ENCODE measurements at regions of chr17 and their contacts with region 1.

Region 1: DNA sequence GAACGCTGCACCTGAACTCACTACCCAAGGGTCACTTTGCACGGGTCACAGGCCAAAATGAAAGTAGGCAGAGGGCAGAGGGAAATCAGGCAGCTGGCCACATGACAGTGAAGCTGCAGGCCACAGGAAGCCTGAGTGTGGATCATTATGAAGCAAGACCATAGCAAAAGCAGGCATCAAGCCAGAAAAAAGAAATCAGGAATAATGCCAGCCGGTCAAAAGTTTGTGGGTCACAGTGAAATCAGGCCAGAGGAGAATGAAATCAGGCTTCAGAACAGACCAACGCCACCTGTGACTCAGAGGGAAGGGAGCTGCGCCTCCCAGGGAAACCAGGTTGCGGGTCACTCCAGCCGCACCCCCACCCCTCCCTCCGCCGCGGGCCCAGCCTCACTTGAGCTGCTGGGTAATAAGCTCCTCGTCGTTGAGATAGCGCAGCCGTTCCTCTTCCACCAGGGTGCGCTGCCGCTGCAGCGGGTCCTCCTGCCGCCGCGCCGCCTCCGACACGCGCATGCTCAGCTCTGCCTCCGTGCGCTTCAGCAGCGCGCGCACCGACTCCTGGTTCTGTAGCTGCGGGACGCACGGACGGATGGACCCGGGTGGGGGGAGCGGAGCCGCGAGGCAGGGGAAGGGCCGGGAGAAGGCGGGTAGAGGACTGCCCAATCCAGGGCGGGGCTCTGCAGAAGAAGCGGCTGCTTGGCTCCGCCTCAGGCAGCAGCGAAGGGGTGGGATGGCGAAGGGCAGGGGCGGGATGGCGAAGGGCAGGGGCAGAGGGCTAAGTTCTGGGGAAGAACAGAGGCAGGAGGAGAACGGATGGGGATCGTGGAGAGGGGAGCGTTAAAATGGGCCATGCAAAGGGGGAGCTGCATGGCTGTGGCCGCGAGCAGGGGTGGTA is 47.7 kb downstream of the SRCIN1 start:
- DNase-seq: peak; percentile 97
- H3K4me3 Mint-ChIP-seq: peak overlapping the region; percentile 90
- H3K27ac Mint-ChIP-seq: peak overlapping the region; percentile 29
- H3K4me1 Mint-ChIP-seq: peaks cover 23% of the 10 kb centered on the region
- H3K27me3 Mint-ChIP-seq: peaks cover 52% of the 10 kb centered on the region

Region 2: GRCh38 chr17:36942019-36942599 is 1616.0 kb before region 1 on chr17:
- intact Hi-C with region 1: loop called (anchors 5 kb)
- DNase-seq: peak; percentile 67
- H3K4me3 Mint-ChIP-seq: peak overlapping the region; percentile 2
- H3K27ac Mint-ChIP-seq: peak overlapping the region; percentile 39
- H3K4me1 Mint-ChIP-seq: peaks cover 25% of the 10 kb centered on the region
- H3K27me3 Mint-ChIP-seq: peaks cover 78% of the 10 kb centered on the region

Region 3: GRCh38 chr17:38584350-38584925 is 26.4 kb after region 1 on chr17:
- intact Hi-C with region 1: loop called (anchors 1 kb)
- DNase-seq: peak; percentile 88
- H3K4me3 Mint-ChIP-seq: peak overlapping the region; percentile 46
- H3K27ac Mint-ChIP-seq: peak overlapping the region; percentile 57
- H3K4me1 Mint-ChIP-seq: peaks cover 16% of the 10 kb centered on the region
- H3K27me3 Mint-ChIP-seq: peaks cover 70% of the 10 kb centered on the region

Region 4: GRCh38 chr17:38605888-38606645 is 48.0 kb after region 1 on chr17 and contains the start of gene SRCIN1:
- intact Hi-C with region 1: loop called (anchors 2 kb)
- DNase-seq: peak; percentile 85
- H3K4me3 Mint-ChIP-seq: peak within 1 kb of the TSS; percentile 80
- H3K27ac Mint-ChIP-seq: peak within 1 kb of the TSS; percentile 20
- H3K4me1 Mint-ChIP-seq: peaks cover 10% of the 10 kb centered on the region
- H3K27me3 Mint-ChIP-seq: peaks cover 69% of the 10 kb centered on the region
- total RNA-seq, gene SRCIN1: 0.21 and 0.26 TPM in 2 replicates

Region 5: GRCh38 chr17:38667099-38667786 is 109.2 kb after region 1 on chr17:
- intact Hi-C with region 1: loop called (anchors 1 kb)
- DNase-seq: peak; percentile 89
- H3K4me3 Mint-ChIP-seq: no peak overlapping the region
- H3K27ac Mint-ChIP-seq: no peak overlapping the region
- H3K4me1 Mint-ChIP-seq: peaks cover 21% of the 10 kb centered on the region
- H3K27me3 Mint-ChIP-seq: peaks cover 55% of the 10 kb centered on the region

Region 6: DNA sequence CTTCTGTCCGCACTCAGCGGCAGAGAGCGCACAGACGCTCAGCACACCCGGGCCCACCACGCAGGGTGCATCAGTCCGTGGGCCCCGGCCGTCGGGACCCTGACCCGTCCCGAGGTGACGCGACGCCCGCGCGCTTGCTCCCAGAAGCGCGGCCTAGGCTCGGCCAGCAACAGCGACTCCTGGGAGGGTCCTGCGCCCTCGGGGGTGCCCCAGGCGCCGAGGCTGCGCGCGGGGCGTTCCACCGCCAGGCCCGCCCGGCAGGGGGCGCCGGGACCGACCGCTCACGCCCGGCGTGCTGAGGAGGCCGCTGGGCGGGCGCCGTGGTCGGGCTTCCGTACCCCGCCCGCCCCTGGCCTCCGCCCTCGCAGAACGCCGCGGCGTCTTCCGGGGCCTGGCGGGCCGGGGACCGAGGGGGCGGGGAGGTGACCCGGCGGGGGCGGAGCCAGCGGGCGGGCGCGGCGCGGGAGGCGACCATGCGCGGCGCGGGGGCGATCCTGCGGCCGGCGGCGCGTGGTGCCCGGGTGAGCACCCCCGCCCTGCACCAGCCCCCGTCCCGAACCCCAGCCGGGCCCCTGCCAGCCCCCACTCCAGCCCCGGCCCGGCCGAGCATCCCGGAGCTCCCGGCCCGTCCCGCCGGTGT is 171.9 kb after region 1 on chr17 and contains the start of gene CISD3:
- intact Hi-C with region 1: loop called (anchors 10 kb)
- DNase-seq: peak; percentile 97
- H3K4me3 Mint-ChIP-seq: peak within 1 kb of the TSS; percentile 93
- H3K27ac Mint-ChIP-seq: peak within 1 kb of the TSS; percentile 95
- H3K4me1 Mint-ChIP-seq: peaks cover 72% of the 10 kb centered on the region
- H3K27me3 Mint-ChIP-seq: no peaks in the 10 kb centered on the region
- total RNA-seq, gene CISD3: 44.0 and 46.7 TPM in 2 replicates

Region 7: GRCh38 chr17:39591958-39592954 is 1034.2 kb after region 1 on chr17:
- intact Hi-C with region 1: loop called (anchors 5 kb)
- DNase-seq: peak; percentile 84
- H3K4me3 Mint-ChIP-seq: no peak overlapping the region
- H3K27ac Mint-ChIP-seq: no peak overlapping the region
- H3K4me1 Mint-ChIP-seq: peaks cover 3% of the 10 kb centered on the region
- H3K27me3 Mint-ChIP-seq: peaks cover 49% of the 10 kb centered on the region